Right ventricle myocardium superior (tissue), 1 donor: ENCODE measurements at regions of chr1 and their contacts with region 1.

Region 1: GRCh38 chr1:15128520-15129313 is 24.8 kb upstream of the TMEM51 start:
- DNase-seq: peak; percentile 82
- ATAC-seq: peak; percentile 95

Region 2: DNA sequence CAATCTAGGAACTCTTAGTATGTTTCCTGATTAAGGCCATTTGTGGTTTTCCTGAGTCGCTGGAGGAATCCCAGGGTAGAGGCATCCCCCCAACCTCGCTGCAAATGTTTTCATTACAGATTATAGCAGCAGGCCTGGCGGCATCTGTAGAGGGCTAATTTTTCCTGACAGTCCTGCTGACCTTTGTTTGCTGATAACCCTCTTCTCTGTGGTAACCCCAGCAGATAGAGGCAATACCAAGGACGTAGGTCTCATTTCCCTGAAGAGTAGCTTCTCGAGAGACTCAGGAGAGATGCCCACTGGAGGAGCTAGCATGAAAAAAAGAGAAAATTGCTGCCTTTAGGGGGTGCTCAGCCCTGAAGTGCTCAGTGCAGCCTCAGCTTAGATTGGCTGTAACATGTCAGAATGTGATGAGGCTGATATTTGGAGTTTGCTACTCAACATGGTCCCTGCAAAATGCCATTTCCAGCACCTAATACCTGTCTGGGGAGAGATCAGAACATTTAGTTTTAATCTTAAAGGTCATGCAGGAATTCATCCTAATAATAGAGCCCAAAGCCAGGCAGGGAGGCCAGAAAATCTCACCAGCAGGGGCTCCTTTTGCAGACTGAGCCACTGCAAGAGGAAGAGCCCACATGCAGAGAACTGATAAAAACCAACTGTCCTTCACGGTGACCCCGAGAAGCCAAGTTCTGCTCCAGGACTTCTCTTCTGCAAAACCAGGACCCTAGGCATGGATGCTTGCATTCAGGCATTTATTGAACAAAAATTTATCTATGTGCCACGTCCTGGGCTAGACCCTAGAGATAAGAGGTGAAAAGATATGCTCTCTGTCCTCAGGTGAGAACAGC is 345.8 kb before region 1 on chr1:
- intact Hi-C with region 1: no loop called
- DNase-seq: no peak
- ATAC-seq: no peak

Region 3: DNA sequence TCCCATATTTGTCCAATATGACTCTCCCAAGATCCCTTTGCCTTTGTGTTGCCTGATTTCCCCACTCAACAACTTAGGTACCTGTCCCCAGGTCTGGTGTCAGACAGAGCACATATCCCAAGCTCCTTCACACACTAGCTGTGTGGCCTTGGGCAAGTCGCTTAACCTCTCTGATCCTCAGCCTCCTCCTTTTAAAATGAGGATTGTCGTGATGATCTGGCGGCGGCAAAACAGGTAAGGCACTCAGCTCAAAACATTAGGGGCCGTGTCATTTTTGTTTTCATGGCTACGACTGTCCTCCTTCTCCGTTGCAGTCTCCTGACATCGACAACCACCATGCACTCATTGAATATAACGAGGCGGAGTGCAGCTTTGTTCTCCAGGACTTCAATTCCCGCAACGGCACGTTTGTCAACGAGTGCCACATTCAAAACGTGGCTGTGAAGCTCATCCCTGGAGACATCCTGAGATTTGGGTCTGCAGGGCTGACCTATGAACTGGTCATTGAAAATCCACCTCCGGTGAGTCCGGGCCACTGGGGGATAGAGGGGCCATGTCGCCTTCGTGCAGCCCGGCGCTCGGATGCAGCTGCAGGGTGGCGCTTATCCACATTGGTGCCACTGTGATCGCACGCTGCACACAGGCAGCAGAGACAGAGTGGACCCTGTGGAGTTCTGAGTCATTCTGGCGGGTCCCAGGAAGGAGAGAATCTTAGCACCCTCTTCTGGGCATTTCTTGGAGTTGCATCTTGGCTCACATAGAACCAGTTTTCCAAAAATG is 143.5 kb after region 1 on chr1:
- intact Hi-C with region 1: loop called (anchors 5 kb)
- DNase-seq: peak; percentile 57
- ATAC-seq: peak; percentile 94

Region 4: DNA sequence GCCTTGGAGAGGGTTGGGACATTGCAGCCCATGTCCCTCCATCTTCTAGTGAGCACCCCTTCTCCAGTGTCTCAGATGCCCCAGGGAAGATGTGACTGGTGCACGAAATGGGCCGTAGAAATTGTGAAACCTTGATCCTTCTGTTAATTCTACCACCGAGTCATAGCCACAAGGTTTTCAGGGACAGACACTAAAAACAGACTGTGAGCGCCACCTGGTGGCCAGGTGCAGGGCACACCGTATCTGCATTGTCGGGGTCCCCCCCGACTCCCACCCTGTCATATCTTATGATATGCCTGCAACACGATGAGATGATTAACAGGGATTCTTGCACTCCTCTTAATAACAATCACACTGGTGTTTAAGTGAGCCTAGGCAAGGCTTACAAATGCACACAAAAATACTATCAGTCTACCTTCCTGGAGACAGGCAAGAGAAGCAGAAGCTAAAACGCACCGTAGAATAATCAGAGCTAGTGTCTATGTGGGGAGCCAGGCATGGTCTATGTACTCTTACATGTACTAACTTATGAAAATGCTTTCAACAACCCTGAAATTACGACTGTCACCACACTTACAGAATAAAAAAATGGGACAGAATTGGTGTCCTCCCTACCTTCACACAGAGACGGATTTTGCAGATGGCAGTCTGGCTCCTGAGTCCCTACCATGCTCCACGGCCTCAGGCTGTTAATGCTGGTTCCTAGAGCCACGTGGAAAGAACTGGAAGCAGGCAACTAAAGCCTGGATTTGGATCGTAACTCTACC is 176.2 kb after region 1 on chr1:
- intact Hi-C with region 1: loop called (anchors 2 kb)
- DNase-seq: peak; percentile 79
- ATAC-seq: peak; percentile 73